WTC11 (cell line): ENCODE measurements at regions of chr15 and their contacts with region 1.

Region 1: GRCh38 chr15:40593588-40594428 is at the start of gene KNL1:
- DNase-seq: peak; percentile 92
- ATAC-seq: peak; percentile 78
- H3K4me3 Mint-ChIP-seq: peak within 1 kb of the TSS; percentile 92
- H3K27ac Mint-ChIP-seq: peak within 1 kb of the TSS; percentile 100
- H3K4me1 Mint-ChIP-seq: peaks cover 27% of the 10 kb centered on the region
- H3K27me3 Mint-ChIP-seq: no peaks in the 10 kb centered on the region; the same call in 1 of the 2 replicates
- CTCF ChIP-seq: no peak
- total RNA-seq, gene KNL1: 18.4 to 24.0 TPM (median 21.1 TPM) in 3 replicates

Region 2: GRCh38 chr15:40525855-40526254 is 68.0 kb before region 1 on chr15:
- CTCF ChIA-PET with region 1: interaction called, 17 read pairs
- POLR2A ChIA-PET with region 1: no interaction called
- DNase-seq: no peak
- ATAC-seq: no peak
- H3K4me3 Mint-ChIP-seq: no peak overlapping the region
- H3K27ac Mint-ChIP-seq: peak overlapping the region; percentile 41; the same call in 1 of the 2 replicates
- H3K4me1 Mint-ChIP-seq: no peaks in the 10 kb centered on the region
- H3K27me3 Mint-ChIP-seq: no peaks in the 10 kb centered on the region; the same call in 1 of the 2 replicates
- CTCF ChIP-seq: no peak

Region 3: DNA sequence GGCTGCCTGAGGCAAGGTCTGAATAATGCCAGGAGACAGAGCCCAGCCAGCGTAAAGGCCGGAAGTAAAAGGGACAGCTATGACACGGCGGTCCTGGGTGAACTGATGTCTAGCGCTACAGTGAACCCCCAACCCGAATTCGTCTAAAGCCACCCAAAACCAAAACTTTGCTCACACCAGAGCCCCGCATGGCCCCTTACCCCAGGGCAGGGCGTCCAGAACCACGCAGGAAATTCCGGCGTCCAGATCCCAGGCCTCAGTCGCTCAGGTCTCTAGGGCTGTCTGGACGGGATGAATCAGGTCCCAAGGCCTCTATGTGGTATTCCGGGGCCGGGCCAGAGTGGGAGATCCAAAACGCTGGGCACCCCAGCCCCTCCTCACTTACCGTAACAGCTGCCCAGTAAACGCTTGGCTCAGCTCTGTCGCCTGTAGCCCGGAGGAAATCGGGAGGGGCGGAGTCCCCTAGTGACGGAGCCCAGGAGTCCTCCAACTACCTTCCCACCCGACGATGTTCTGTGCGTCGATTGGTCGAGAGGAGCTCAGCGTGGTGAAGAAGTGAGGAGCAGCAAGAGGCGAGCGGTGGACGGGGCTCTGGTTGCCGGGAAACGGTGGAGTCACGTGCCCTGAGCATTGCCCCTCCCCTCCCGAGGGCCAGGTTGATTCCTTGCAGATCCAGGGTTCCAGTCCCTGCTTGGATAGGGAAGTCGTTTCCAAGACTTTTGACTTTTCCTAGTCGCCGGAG is 29.0 kb before region 1 on chr15 and contains the start of gene CCDC32:
- CTCF ChIA-PET with region 1: interaction called, 32 read pairs
- POLR2A ChIA-PET with region 1: interaction called, 9 read pairs
- DNase-seq: peak; percentile 97
- ATAC-seq: peak; percentile 98
- H3K4me3 Mint-ChIP-seq: peak within 1 kb of the TSS; percentile 89
- H3K27ac Mint-ChIP-seq: peak within 1 kb of the TSS; percentile 92
- H3K4me1 Mint-ChIP-seq: peaks cover 23% of the 10 kb centered on the region
- H3K27me3 Mint-ChIP-seq: no peaks in the 10 kb centered on the region
- CTCF ChIP-seq: no peak
- total RNA-seq, gene CCDC32: 12.8 to 15.6 TPM (median 13.7 TPM) in 3 replicates

Region 4: DNA sequence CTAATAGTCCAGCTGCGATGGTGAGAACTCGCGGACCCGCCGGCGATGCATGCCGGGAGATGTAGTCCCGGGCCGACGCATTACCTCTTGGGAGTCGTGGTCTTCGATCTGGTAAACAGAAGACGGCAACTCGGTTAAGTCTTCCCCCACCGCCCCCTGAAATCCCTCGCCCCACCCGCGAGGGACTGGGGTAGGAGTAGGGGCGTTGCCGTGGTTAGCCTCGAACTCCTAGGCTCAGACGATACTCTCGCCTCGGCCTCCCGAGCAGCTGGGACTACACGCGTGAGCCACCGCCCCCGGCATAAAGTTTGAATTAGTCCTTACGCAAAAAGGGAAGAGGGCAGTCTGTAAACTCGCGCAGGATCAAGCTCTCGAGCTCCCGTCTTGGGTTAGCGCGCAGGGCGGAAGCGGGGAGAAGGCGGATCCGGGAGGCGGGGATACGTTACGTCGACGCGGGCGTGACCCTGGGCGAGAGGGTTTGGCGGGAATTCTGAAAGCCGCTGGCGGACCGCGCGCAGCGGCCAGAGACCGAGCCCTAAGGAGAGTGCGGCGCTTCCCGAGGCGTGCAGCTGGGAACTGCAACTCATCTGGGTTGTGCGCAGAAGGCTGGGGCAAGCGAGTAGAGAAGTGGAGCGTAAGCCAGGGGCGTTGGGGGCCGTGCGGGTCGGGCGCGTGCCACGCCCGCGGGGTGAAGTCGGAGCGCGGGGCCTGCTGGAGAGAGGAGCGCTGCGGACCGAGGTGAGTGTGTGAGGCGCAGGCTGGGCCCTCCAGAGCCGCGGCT is 101.1 kb after region 1 on chr15 and contains the start of gene RAD51:
- CTCF ChIA-PET with region 1: interaction called, 14 read pairs
- POLR2A ChIA-PET with region 1: interaction called, 8 read pairs
- DNase-seq: peak; percentile 93
- ATAC-seq: peak; percentile 92
- H3K4me3 Mint-ChIP-seq: peak within 1 kb of the TSS; percentile 97
- H3K27ac Mint-ChIP-seq: peak within 1 kb of the TSS; percentile 100
- H3K4me1 Mint-ChIP-seq: peaks cover 10% of the 10 kb centered on the region
- H3K27me3 Mint-ChIP-seq: no peaks in the 10 kb centered on the region
- CTCF ChIP-seq: no peak
- total RNA-seq, gene RAD51: 29.7 to 36.4 TPM (median 31.0 TPM) in 3 replicates